Activated T-helper 2 cell treated with anti-CD3 and anti-CD28 coated beads, Interferon-gamma antibody, Interleukin-2, Interleukin-4, amounts not matched to agents 10 μg/mL and 5 μg/mL and 100 μg/mL, durations not matched to agents 14 hours and 24 hours and 36 hours (primary cell): ENCODE measurements at regions of chr1 and their contacts with region 1.

Region 1: DNA sequence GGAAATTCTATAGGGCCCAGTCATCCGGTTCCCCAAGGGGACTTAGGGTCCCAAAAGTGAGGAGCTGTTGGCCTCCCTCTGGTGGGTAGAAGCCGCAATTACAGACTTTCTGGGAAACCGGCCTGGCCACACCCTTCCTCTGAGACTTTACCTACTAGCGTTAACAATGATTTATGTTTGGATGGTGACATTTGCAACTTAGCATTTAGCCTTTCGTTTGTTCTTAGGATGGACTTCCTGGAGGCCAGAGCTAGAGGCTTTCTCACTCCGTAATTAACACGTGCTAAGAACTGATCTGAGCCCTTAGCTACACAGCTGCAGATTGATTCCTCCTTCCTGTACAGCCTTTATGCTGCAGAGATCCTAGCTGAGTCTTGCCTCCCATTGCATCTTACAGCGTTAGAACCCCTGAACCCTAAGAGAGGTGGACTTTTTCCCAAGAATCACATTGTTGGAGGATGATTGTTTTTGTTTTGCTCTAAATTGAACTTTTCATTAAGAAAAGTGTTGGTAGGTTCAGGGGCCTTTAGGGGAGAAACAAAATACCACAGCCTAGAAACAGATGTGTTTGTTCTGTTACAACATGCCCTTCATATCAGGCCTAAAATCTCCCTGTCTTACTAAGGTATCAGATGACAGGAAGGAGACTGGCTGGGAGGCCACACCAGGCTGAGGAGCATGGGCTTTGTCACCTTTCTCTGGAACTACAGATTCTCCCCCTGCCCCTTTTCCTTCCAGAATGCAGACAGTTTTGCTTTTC is 2.0 kb downstream of the S100A11 start:
- DNase-seq: peak; percentile 66
- H3K4me3 Mint-ChIP-seq: peak overlapping the region; percentile 99
- H3K27ac Mint-ChIP-seq: peak overlapping the region; percentile 97
- H3K4me1 Mint-ChIP-seq: peaks cover 33% of the 10 kb centered on the region
- H3K27me3 Mint-ChIP-seq: no peaks in the 10 kb centered on the region

Region 2: GRCh38 chr1:151939779-151940178 is 95.0 kb before region 1 on chr1:
- intact Hi-C with region 1: loop called (anchors 2 kb)
- DNase-seq: no peak
- H3K4me3 Mint-ChIP-seq: no peak overlapping the region
- H3K27ac Mint-ChIP-seq: no peak overlapping the region
- H3K4me1 Mint-ChIP-seq: peaks cover 13% of the 10 kb centered on the region
- H3K27me3 Mint-ChIP-seq: peaks cover 8% of the 10 kb centered on the region